ENCODE measurements at regions of chr1 and their contacts with region 1.

Region 1: GRCh38 chr1:110460253-110461220 is 9.6 kb downstream of the PROK1 start:
- DNase-seq: peak; percentile 94
- ATAC-seq: peak; percentile 48
- H3K4me3 ChIP-seq: no peak overlapping the region
- H3K27ac ChIP-seq: no peak overlapping the region
- H3K4me1 ChIP-seq: peaks cover 26% of the 10 kb centered on the region
- H3K27me3 ChIP-seq: no peaks in the 10 kb centered on the region
- CTCF ChIP-seq: peak; percentile 94

Region 2: GRCh38 chr1:110087812-110088738 is 372.5 kb before region 1 on chr1:
- CTCF ChIA-PET with region 1: interaction called, 3 read pairs
- POLR2A ChIA-PET with region 1: no interaction called
- intact Hi-C with region 1: loop called (anchors 1 kb)
- DNase-seq: peak; percentile 76
- ATAC-seq: peak; percentile 96
- H3K4me3 ChIP-seq: no peak overlapping the region
- H3K27ac ChIP-seq: no peak overlapping the region
- H3K4me1 ChIP-seq: no peaks in the 10 kb centered on the region
- H3K27me3 ChIP-seq: 0 out of 2 replicates have a peak, but pooled peaks cover 5% of the 10 kb centered on the region
- CTCF ChIP-seq: peak; percentile 72

Region 3: DNA sequence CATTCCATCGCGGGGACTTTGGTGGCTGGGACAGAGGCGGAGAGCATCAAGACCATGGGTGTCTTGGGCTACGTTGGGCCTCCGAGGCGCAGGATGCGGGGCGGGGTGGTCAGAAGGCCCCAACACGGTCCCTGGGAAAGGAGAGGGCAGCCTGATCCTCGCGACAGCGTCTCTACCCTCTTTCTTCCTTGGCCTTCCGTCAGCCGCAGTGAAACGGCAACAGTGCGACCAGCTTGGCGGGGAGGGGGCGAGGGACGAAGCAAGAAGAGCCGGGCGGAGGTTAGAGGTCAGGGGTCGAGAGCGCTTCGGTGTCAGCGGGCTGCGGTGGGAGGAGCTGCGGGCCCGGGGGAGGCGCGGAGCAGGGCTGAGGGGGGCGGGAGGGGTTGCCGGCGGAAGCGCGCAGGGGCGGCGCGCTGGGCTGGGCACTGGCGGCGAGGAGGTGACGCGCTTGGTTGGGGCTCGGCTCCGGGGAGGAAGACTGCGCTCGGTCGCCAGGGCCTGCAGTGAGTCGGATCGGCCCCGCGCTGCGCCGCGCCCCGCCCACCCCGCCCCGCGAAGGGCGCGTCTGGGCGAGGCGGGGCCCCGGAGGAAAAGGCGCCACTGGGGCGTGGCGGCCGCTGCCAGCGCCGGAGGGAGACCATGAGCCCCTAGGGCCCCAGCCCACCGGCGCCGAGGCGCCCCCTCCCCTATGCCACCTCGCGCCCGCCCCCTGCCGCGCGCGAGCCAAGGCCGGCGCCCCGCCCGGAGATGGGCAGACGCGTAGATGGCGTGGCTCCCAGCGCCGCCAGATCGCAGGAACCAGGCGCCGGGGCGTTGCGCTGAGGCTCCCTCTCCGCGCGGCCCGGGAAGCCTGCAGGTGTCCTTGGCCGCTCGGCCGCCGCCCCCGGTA is 250.6 kb before region 1 on chr1 and contains the start of gene KCNC4:
- CTCF ChIA-PET with region 1: interaction called, 14 read pairs
- POLR2A ChIA-PET with region 1: no interaction called
- intact Hi-C with region 1: loop called (anchors 1 kb)
- DNase-seq: peak; percentile 79
- ATAC-seq: peak; percentile 78
- H3K4me3 ChIP-seq: peak within 1 kb of the TSS; percentile 83
- H3K27ac ChIP-seq: no peak within 1 kb of the TSS
- H3K4me1 ChIP-seq: peaks cover 30% of the 10 kb centered on the region; the same call in 1 of the 2 replicates
- H3K27me3 ChIP-seq: no peaks in the 10 kb centered on the region
- CTCF ChIP-seq: no peak
- total RNA-seq, gene KCNC4: 1.6 and 3.6 TPM in 2 replicates

Region 4: DNA sequence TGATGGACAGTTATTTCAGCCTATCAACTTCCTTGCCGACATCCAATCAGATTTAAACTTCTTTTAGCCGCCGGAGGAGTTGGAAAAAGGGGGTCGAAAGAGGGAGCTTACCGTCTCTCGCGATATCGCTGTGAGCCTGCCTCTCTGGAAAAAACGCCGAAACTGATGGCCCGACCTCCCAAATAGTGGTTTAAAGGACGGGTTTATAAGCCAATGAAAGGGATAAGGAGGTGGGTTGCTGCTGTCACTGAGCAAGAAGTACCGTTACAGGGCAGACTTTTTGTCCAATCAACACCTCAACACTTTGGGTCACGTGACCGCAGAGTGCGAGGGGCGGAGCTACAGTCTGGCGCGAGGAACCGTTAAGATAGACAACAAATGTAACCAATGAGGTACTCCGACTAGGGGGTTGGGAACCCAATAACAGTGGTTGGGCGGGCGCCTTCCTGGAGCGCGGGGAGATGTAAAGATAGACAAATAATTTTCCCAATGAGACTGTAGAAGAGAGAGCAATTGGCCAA is 121.6 kb before region 1 on chr1 and contains the start of gene RBM15:
- CTCF ChIA-PET with region 1: interaction called, 12 read pairs
- POLR2A ChIA-PET with region 1: no interaction called
- intact Hi-C with region 1: loop called (anchors 5 kb)
- DNase-seq: peak; percentile 100
- ATAC-seq: peak; percentile 76
- H3K4me3 ChIP-seq: peak within 1 kb of the TSS; percentile 92
- H3K27ac ChIP-seq: peak within 1 kb of the TSS; percentile 95
- H3K4me1 ChIP-seq: peaks cover 41% of the 10 kb centered on the region
- H3K27me3 ChIP-seq: no peaks in the 10 kb centered on the region
- CTCF ChIP-seq: no peak
- total RNA-seq, gene RBM15: 41.3 and 47.0 TPM in 2 replicates

Region 5: GRCh38 chr1:110495926-110496600 is 35.5 kb after region 1 on chr1:
- CTCF ChIA-PET with region 1: interaction called, 39 read pairs
- POLR2A ChIA-PET with region 1: no interaction called
- intact Hi-C with region 1: loop called (anchors 1 kb)
- DNase-seq: peak; percentile 88
- ATAC-seq: peak; percentile 95
- H3K4me3 ChIP-seq: no peak overlapping the region
- H3K27ac ChIP-seq: no peak overlapping the region
- H3K4me1 ChIP-seq: no peaks in the 10 kb centered on the region
- H3K27me3 ChIP-seq: no peaks in the 10 kb centered on the region
- CTCF ChIP-seq: peak; percentile 96